Heart right ventricle (tissue), 16 donors: ENCODE measurements at regions of chr15 and their contacts with region 1.

Region 1: GRCh38 chr15:40893733-40894688 is at the start of gene VPS18:
- DNase-seq: peak; percentile 98 to 99
- ATAC-seq: peak; percentile 97 to 99 (median 99)
- H3K4me3 ChIP-seq: peak within 1 kb of the TSS; percentile 57 to 99 (median 90)
- H3K27ac ChIP-seq: peak within 1 kb of the TSS; percentile 69 to 95 (median 86)
- H3K4me1 ChIP-seq: peaks cover 0 to 30% (median 20%) of the 10 kb centered on the region in 9 donors
- H3K27me3 ChIP-seq: no peaks in the 10 kb centered on the region
- CTCF ChIP-seq: peak; percentile 96 to 99 (median 99)
- total RNA-seq, gene VPS18: 16.0 to 25.0 (median 21.5) TPM

Region 2: DNA sequence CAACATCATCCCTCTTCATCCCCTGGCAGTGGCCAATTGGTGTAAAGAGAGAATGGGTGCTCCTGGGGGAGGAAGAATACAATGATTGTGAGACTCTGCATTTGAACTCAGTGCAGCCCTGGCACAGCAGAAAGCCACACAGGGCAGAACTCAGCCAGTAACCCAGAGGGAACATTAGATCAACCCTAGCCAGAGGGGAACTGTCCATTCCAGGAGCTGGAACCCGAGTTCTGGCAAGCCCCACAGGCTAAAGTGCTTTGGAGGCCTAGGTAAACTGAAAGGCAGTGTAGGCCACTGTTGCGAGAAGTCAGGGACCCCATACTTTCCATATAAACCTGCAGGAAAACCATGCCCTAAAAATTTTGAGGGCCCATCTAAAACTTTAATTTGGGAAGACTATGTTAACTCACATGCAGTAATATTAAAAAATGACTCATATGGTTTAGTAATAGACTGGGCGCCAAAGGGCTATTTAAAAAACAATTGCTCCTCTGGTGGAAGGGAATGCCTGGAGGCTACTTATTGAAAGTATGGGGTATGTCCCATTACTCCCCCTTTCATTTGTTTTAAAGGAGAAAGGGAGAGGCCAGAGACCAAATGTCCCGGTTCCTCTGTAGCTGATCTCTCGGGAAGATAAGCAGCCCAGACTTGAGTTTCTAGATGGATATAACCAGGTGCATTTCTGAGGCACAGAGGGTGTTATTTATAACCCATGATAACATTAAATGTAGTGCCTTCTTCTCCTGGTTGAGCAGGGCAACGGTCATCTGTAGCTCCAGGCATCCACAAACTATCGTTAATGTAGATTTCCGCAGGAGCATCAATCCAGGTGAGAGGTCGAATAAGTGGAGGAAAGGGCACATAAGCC is 204.8 kb before region 1 on chr15:
- intact Hi-C with region 1: loop called in 3 of 10 experiments (anchors 5 to 10 kb)
- DNase-seq: no peak
- ATAC-seq: no peak
- H3K4me3 ChIP-seq: no peak overlapping the region
- H3K27ac ChIP-seq: no peak overlapping the region
- H3K4me1 ChIP-seq: peaks cover 0 to 12% (median 9%) of the 10 kb centered on the region in 9 donors
- H3K27me3 ChIP-seq: no peaks in the 10 kb centered on the region
- CTCF ChIP-seq: no peak

Region 3: DNA sequence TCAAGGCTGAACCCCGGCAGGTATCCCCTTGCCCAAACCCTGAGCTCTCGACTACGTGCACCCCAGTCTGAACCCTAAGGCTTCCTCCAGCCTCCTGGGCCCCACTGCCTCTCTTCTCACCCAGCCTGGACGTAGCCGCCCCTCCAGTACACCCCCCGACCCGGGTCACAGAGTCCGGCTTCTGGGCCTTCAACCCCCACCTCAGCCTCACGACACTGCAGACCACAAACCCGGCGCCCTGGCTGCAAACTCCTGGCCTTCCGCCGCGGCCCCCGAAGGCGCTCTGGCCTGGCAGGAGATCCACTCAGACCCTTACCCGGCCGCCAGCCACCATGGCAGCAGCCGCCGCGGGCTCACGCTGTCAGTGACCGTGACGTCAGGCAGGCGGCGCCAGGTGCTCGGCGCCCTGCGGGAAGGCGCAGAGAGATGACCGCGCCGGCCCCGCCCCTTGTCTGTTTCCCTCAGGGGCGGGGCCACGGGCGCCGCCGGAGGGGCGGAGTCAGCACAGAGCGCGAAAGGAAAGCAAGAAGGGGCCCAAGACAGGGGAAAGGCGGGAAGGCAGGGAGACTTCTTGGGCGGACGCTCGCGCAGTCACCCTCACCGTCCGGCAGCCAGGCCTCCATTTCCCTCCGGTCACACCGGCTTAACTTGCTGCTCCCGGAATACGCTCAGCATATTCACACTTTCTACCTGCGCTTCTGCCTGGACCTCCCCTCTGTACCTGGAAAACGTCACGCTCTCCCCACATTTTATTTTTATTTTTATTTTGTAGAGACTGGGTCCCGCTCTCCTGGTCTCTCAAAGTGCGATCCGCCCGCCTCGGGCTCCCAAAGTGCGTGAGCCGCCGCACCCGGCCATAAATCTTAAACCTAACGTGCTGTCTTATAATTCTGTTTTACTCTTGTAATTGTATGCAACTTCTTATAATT is 138.9 kb before region 1 on chr15 and contains the start of gene RMDN3:
- intact Hi-C with region 1: loop called in 1 of 10 experiments (anchors 10 kb)
- DNase-seq: peak; percentile 90 to 94
- ATAC-seq: peak; percentile 98 to 100 (median 98)
- H3K4me3 ChIP-seq: peak within 1 kb of the TSS; percentile 74 to 96 (median 90)
- H3K27ac ChIP-seq: peak within 1 kb of the TSS in 9 of 10 donors; percentile 75 to 89 (median 82)
- H3K4me1 ChIP-seq: peaks cover 0 to 27% (median 17%) of the 10 kb centered on the region in 9 donors
- H3K27me3 ChIP-seq: no peaks in the 10 kb centered on the region
- CTCF ChIP-seq: peak in 3 of 9 donors; percentile 19 to 37 (median 21)
- total RNA-seq, gene RMDN3: 12.2 to 20.9 (median 17.6) TPM

Region 4: DNA sequence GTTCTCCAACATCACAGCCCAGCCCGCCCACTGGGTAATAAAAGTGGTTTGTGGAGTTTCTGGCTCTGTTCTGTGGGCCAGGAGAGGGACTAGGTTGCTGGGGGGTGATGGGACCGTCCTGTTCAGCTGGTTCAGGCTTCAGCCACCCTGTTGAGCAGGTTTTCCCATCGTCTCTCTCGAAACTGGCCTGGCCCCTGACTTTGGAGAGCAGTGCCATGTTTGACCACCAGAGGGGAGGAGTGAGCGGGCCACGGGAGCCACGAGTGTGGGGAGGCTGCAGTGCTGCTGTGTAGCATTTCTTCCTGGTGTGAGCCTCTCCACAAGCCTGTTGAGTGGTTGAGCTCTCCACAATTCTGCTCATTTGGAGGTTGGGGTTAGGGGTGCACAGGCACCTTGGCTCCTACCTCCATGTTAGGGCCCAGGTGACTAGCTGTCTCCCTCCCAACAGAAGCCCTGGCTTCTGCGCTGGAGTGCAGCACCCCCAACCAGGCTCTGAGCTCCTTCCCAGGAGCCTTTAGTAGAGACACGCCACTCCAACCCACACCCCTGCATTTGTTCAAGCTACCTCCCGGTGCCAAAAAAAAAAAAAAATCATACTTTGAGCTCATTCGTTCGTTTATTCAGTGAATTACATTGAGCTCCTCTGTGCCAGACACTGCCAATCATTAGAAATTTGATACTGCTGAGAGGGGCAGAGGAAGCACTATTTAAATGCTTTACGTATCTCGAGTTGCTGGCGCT is 36.2 kb before region 1 on chr15:
- intact Hi-C with region 1: loop called in 9 of 10 experiments (anchors 1 to 5 kb)
- DNase-seq: peak; percentile 57 to 73
- ATAC-seq: peak; percentile 75 to 89 (median 84)
- H3K4me3 ChIP-seq: no peak overlapping the region
- H3K27ac ChIP-seq: no peak overlapping the region
- H3K4me1 ChIP-seq: peaks cover 0 to 20% (median 0%) of the 10 kb centered on the region in 9 donors
- H3K27me3 ChIP-seq: peaks cover 0 to 19% (median 0%) of the 10 kb centered on the region in 7 donors
- CTCF ChIP-seq: peak; percentile 86 to 95 (median 93)

Region 5: DNA sequence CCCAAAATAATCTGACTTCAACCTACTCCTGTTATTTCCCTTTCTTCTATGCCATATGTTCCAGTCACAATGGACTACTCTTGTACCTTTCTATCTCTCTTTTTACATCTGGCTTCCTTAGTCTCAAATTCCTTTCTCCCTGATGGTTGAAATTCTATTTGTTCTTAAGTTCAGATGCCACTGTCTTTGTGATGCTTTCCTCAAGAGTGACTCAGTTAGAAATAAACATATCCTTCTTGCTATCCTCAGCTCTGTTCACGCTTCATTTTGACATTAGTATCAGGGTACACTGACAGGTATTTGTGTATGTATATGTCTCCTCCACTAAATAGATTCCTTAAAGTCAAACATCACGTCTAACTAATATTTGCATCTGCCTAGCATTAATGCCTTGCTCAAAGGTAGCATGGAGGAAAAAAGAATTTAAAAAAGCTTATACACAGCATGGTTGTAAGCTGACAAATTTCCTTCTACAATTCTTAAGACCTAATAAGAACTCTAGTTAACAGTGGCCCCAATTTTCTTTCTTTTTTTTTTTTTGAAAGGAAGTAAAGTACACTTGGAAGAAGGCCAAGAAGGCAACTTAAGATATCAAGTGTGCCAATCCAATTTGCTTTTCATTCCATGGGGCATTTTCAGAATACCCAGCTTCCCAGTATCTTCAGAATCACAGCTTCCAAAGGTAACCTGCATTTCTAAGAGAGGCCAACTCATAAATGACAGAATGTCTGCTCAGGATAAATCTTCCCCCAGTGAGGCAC is 117.2 kb after region 1 on chr15:
- intact Hi-C with region 1: no loop called
- DNase-seq: no peak
- ATAC-seq: no peak
- H3K4me3 ChIP-seq: no peak overlapping the region
- H3K27ac ChIP-seq: no peak overlapping the region
- H3K4me1 ChIP-seq: peaks cover 0 to 34% (median 20%) of the 10 kb centered on the region in 9 donors
- H3K27me3 ChIP-seq: no peaks in the 10 kb centered on the region
- CTCF ChIP-seq: no peak